ENCODE measurements at regions of chr9 and their contacts with region 1.

Region 1: DNA sequence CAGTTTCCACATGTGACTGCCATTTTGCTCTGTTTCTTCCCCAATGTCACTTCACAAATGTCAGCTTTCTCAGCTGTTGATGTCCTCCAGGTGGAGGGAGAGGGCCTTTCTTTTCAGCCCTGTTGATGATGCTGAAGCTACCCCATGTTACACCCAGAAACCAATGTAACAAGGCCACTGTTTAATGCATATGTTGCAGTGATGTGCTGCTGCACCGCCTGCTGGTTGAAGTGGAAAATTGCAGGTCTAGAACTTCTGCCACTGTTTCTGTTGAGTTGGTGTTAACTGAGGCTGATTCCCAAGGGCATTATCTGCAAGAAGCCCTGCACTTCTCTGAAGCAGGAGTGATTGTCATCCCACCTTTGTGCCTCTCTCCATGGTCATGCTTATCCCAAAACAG is 428.4 kb downstream of the KDM4C start:
- DNase-seq: peak; percentile 67
- H3K4me3 Mint-ChIP-seq: no peak overlapping the region
- H3K27ac Mint-ChIP-seq: no peak overlapping the region
- H3K4me1 Mint-ChIP-seq: peaks cover 14% of the 10 kb centered on the region
- H3K27me3 Mint-ChIP-seq: no peaks in the 10 kb centered on the region
- CTCF ChIP-seq: peak; percentile 63

Region 2: GRCh38 chr9:6584881-6585597 is 601.1 kb before region 1 on chr9:
- CTCF ChIA-PET with region 1: no interaction called
- POLR2A ChIA-PET with region 1: no interaction called
- intact Hi-C with region 1: no loop called
- DNase-seq: peak; percentile 40
- H3K4me3 Mint-ChIP-seq: no peak overlapping the region
- H3K27ac Mint-ChIP-seq: no peak overlapping the region
- H3K4me1 Mint-ChIP-seq: no peaks in the 10 kb centered on the region
- H3K27me3 Mint-ChIP-seq: no peaks in the 10 kb centered on the region
- CTCF ChIP-seq: peak; percentile 38

Region 3: DNA sequence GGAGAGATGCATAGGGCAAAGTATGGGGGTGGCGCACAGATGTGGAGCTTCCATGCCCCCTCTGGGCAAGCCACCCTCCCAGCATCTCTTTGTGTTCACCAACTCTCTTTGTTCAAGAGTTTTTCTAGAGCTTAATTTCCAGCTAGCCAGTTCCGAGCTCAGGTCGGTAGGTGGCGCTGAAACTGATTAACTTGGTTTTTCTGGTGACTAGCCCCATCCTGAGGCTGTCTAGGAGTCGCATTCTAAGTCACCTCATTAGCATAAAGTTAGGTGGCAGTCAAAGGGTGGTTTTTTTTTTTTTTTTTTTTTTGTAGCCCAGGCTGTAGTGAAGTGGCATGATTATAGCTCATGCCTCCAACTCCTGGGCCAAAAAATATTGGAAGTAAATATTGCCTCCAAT is 48.0 kb after region 1 on chr9:
- CTCF ChIA-PET with region 1: interaction called, 7 read pairs
- POLR2A ChIA-PET with region 1: no interaction called
- intact Hi-C with region 1: loop called (anchors 5 kb)
- DNase-seq: peak; percentile 70
- H3K4me3 Mint-ChIP-seq: no peak overlapping the region
- H3K27ac Mint-ChIP-seq: no peak overlapping the region
- H3K4me1 Mint-ChIP-seq: no peaks in the 10 kb centered on the region
- H3K27me3 Mint-ChIP-seq: peaks cover 15% of the 10 kb centered on the region
- CTCF ChIP-seq: peak; percentile 50